ENCODE measurements at regions of chr13 and their contacts with region 1.

Region 1: GRCh38 chr13:100573121-100573520 is 15.5 kb downstream of the GGACT start:
- DNase-seq: peak; percentile 38 to 64
- H3K4me3 ChIP-seq: no peak overlapping the region
- H3K27ac ChIP-seq: no peak overlapping the region
- H3K4me1 ChIP-seq: no peaks in the 10 kb centered on the region
- H3K27me3 ChIP-seq: no peaks in the 10 kb centered on the region
- CTCF ChIP-seq: peak; percentile 89

Region 2: DNA sequence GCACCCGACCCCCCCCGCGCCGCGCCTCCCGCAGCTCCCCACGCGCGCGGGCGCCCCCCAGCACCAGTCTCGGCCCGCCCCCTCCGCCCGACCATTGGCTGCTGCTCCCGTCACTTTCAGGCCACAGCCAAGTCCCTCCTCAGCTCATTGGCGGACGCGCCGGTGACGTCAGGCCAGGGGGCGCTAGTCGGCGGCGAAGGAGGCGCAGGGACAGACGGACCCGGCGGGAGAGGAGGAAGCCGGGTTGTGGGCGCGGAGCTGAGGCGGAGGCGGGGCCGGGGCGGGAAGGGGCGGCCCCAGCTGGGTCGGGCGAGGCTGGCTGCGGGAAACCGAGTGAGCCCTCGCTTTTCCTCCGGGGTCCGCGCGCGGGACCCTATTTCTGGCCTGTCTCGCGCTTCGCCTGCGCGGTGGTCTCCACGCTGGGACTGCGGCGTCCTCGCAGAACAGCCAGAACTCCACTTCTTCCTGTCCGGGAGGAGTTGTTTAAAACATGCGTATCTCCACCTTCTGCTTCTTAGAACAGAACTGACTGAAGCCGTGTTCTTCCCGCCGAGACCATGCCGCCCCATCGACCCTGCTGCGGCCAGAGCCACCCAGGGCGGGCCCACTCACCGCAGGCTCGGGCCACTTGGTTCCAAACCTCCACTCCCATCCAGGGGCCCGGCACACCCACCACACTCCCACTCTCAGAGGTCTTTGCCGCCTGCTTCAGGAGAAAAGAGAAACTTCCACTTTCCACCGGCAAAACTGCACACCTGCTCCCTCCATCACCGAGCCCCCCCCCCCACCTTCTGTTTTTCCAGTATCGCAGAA is 101.9 kb after region 1 on chr13:
- CTCF ChIA-PET with region 1: interaction called, 16 read pairs
- POLR2A ChIA-PET with region 1: no interaction called
- intact Hi-C with region 1: no loop called
- DNase-seq: peak; percentile 96 to 99
- H3K4me3 ChIP-seq: peak overlapping the region; percentile 67
- H3K27ac ChIP-seq: no peak overlapping the region
- H3K4me1 ChIP-seq: peaks cover 8% of the 10 kb centered on the region
- H3K27me3 ChIP-seq: peaks cover under 1% of the 10 kb centered on the region; the same call in 1 of the 2 replicates
- CTCF ChIP-seq: peak; percentile 45

Region 3: GRCh38 chr13:100721885-100722512 is 148.9 kb after region 1 on chr13:
- CTCF ChIA-PET with region 1: interaction called, 14 read pairs
- POLR2A ChIA-PET with region 1: no interaction called
- intact Hi-C with region 1: no loop called
- DNase-seq: peak in 1 of 2 experiments; percentile 29
- H3K4me3 ChIP-seq: no peak overlapping the region
- H3K27ac ChIP-seq: no peak overlapping the region
- H3K4me1 ChIP-seq: no peaks in the 10 kb centered on the region
- H3K27me3 ChIP-seq: peaks cover 47% of the 10 kb centered on the region
- CTCF ChIP-seq: peak; percentile 84

Measured in PC-9 (cell line).